ENCODE measurements at regions of chr15 and their contacts with region 1.

Region 1: DNA sequence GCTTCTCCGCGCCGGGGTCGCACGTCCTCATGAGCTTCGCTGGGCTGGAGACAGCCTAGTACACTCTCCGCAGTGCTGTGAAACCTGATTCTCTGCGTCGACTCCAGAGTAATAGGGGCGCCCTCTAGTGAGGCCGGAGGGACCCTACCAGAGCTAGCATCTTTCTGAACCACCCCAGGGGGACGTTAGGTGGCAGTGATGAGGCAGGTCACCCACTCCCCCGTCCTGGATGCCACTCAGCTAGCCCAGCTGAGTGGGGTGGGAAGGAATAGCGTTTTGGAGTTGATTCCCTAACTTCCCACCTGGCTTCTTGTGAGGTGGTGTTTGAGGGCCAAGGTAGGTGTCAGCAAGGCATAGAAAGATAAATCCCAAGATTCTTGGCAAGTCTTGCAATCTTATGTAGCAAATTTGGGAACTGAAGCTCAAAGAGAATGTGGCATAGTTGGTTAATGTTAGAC is 4.0 kb downstream of the DUOXA2 start:
- DNase-seq: peak; percentile 45
- ATAC-seq: peak; percentile 98
- H3K4me3 ChIP-seq: peak overlapping the region; percentile 0; the same call in 1 of the 2 replicates
- H3K27ac ChIP-seq: no peak overlapping the region
- H3K4me1 ChIP-seq: no peaks in the 10 kb centered on the region; the same call in 1 of the 2 replicates
- H3K27me3 ChIP-seq: peaks cover 15 to 29% of the 10 kb centered on the region in 2 experiments
- CTCF ChIP-seq: peak; percentile 100; a peak in 5 of 6 replicates
- EP300 ChIP-seq: no peak
- POLR2A ChIP-seq: no peak
- RAD21 ChIP-seq: peak; percentile 76

Region 2: DNA sequence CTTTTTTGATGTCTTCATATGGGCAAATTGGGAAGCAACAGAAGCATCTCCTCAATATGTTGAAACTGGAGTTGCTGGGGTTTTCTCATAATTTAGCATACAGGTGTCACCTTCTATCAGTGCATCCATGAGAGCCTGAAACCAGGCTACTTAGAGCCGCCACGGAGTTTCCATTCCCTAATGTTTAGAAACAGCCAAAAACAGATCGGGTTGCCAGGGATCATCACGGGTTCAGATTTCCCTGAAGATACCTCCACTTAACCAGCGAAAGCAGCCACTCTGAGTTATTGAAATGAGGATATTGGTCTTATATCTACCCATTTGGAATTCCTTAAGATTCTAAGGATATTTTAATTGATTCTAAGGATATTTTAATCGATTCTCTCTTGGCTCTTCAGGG is 147.1 kb before region 1 on chr15:
- CTCF ChIA-PET with region 1: interaction called, 16 read pairs
- POLR2A ChIA-PET with region 1: no interaction called
- RAD21 ChIA-PET with region 1: interaction called, 16 read pairs
- SMC1A ChIA-PET with region 1: interaction called, 9 read pairs
- in situ Hi-C with region 1: no loop called
- intact Hi-C with region 1: loop called (anchors 10 kb)
- DNase-seq: no peak
- ATAC-seq: no peak
- H3K4me3 ChIP-seq: no peak overlapping the region
- H3K27ac ChIP-seq: no peak overlapping the region
- H3K4me1 ChIP-seq: no peaks in the 10 kb centered on the region
- H3K27me3 ChIP-seq: no peaks in the 10 kb centered on the region
- CTCF ChIP-seq: no peak
- EP300 ChIP-seq: no peak
- POLR2A ChIP-seq: no peak
- RAD21 ChIP-seq: no peak

Region 3: DNA sequence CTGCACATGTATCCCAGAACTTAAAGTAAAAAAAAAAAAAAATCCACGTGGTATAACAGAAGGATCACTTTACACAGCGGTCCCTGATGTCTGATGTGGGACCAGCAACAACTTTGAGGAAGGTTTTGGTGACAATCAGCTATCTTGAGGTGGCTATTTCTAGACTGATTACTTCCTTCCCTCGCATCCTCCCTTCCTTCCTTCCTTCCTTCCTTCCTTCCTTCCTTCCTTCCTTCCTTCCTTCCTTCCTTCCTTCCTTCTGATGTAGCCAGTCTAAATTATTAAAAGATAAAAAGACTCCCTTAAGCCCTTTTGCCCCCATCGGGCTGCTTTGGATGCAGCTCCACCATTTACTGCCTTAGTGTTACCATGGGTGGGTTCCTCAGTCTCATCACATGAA is 80.2 kb before region 1 on chr15:
- CTCF ChIA-PET with region 1: interaction called, 24 read pairs
- POLR2A ChIA-PET with region 1: no interaction called
- RAD21 ChIA-PET with region 1: interaction called, 15 read pairs
- SMC1A ChIA-PET with region 1: interaction called, 7 read pairs
- in situ Hi-C with region 1: no loop called
- intact Hi-C with region 1: no loop called
- DNase-seq: no peak
- ATAC-seq: no peak
- H3K4me3 ChIP-seq: no peak overlapping the region
- H3K27ac ChIP-seq: no peak overlapping the region
- H3K4me1 ChIP-seq: no peaks in the 10 kb centered on the region; the same call in 1 of the 2 replicates
- H3K27me3 ChIP-seq: no peaks in the 10 kb centered on the region
- CTCF ChIP-seq: no peak
- EP300 ChIP-seq: no peak
- POLR2A ChIP-seq: no peak
- RAD21 ChIP-seq: no peak

Region 4: GRCh38 chr15:45179221-45179985 is 61.2 kb after region 1 on chr15:
- CTCF ChIA-PET with region 1: interaction called, 5 read pairs
- POLR2A ChIA-PET with region 1: no interaction called
- RAD21 ChIA-PET with region 1: no interaction called
- SMC1A ChIA-PET with region 1: no interaction called
- in situ Hi-C with region 1: loop called (anchors 10 kb)
- intact Hi-C with region 1: no loop called
- DNase-seq: no peak
- ATAC-seq: peak; percentile 52
- H3K4me3 ChIP-seq: no peak overlapping the region
- H3K27ac ChIP-seq: no peak overlapping the region
- H3K4me1 ChIP-seq: no peaks in the 10 kb centered on the region
- H3K27me3 ChIP-seq: no peaks in the 10 kb centered on the region; a peak in 2 of 4 replicates
- CTCF ChIP-seq: peak; percentile 48 to 70 (median 68)
- EP300 ChIP-seq: no peak
- POLR2A ChIP-seq: no peak
- RAD21 ChIP-seq: peak; percentile 31

Measured in GM12878 (cell line).